RWPE1 (cell line): ENCODE measurements at regions of chr2 and their contacts with region 1.

Region 1: DNA sequence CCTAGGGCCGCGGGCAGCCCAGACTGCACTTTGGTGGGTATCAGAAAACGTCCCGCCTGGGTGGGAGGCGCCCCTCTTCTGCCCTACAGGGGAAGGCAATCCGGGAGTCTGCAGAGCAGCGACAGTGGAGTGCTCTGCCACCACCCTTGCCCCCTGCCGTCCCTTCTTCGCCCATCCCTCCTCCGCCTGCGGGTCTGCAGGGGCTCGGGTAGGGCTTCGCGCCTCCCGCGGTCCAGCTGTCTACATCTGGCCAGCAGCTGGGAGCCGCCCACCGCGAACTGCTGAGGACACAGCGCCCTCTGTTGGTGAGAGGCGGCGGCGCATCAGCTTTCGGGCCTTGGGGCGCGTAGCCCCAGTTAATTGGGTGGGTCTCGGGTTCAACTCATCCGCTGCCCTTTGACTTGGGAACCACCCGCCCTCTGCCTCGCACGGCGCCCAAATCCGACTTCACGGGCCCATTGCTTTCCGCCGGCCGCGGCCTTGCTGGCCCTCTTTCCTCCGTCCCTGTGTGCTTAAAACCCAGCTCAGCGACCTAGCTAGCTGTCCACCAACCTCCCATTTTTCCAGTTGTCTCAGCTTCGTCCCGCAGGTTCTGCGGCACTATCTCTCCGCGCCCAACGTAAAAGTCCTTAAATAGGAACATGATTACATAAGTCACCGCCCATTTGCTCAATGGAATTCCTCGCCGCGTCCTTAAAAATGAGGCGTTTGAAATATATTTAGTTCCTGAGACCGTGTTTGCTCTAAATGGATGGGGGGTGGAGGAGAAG is 17.6 kb downstream of the WNT10A start:
- DNase-seq: peak; percentile 65
- H3K27ac ChIP-seq: peak overlapping the region; percentile 84
- CTCF ChIP-seq: peak; percentile 96

Region 2: GRCh38 chr2:218852911-218853667 is 45.2 kb before region 1 on chr2:
- CTCF ChIA-PET with region 1: interaction called, 21 read pairs
- POLR2A ChIA-PET with region 1: no interaction called
- DNase-seq: no peak
- H3K27ac ChIP-seq: no peak overlapping the region
- CTCF ChIP-seq: peak; percentile 77

Region 3: GRCh38 chr2:218863021-218863520 is 35.2 kb before region 1 on chr2:
- CTCF ChIA-PET with region 1: interaction called, 10 read pairs
- POLR2A ChIA-PET with region 1: no interaction called
- DNase-seq: no peak
- H3K27ac ChIP-seq: no peak overlapping the region
- CTCF ChIP-seq: no peak

Region 4: GRCh38 chr2:218908721-218909619 is 10.7 kb after region 1 on chr2:
- CTCF ChIA-PET with region 1: interaction called, 10 read pairs
- POLR2A ChIA-PET with region 1: no interaction called
- DNase-seq: peak; percentile 92
- H3K27ac ChIP-seq: peak overlapping the region; percentile 72
- CTCF ChIP-seq: no peak